ENCODE measurements at regions of chr19 and their contacts with region 1.

Region 1: GRCh38 chr19:36605101-36605876 is at the start of gene ZNF382:
- DNase-seq: peak; percentile 87
- ATAC-seq: peak; percentile 86
- H3K4me3 Mint-ChIP-seq: peak within 1 kb of the TSS; percentile 84
- H3K27ac Mint-ChIP-seq: peak within 1 kb of the TSS; percentile 92
- H3K4me1 Mint-ChIP-seq: peaks cover 19% of the 10 kb centered on the region
- H3K27me3 Mint-ChIP-seq: no peaks in the 10 kb centered on the region
- total RNA-seq, gene ZNF382: 12.0 to 13.3 TPM

Region 2: GRCh38 chr19:36436531-36436930 is 168.8 kb before region 1 on chr19:
- CTCF ChIA-PET with region 1: no interaction called
- POLR2A ChIA-PET with region 1: no interaction called
- DNase-seq: no peak
- ATAC-seq: no peak
- H3K4me3 Mint-ChIP-seq: no peak overlapping the region
- H3K27ac Mint-ChIP-seq: no peak overlapping the region
- H3K4me1 Mint-ChIP-seq: no peaks in the 10 kb centered on the region
- H3K27me3 Mint-ChIP-seq: no peaks in the 10 kb centered on the region

Region 3: GRCh38 chr19:36573020-36573885 is 32.0 kb before region 1 on chr19 and contains the start of gene ZNF529:
- CTCF ChIA-PET with region 1: no interaction called
- POLR2A ChIA-PET with region 1: interaction called, 23 read pairs
- DNase-seq: peak; percentile 91
- ATAC-seq: peak; percentile 87
- H3K4me3 Mint-ChIP-seq: peak within 1 kb of the TSS; percentile 96
- H3K27ac Mint-ChIP-seq: peak within 1 kb of the TSS; percentile 92
- H3K4me1 Mint-ChIP-seq: peaks cover 31% of the 10 kb centered on the region
- H3K27me3 Mint-ChIP-seq: no peaks in the 10 kb centered on the region
- total RNA-seq, gene ZNF529: 13.7 to 15.1 TPM